ENCODE measurements at regions of chr21 and their contacts with region 1.

Region 1: GRCh38 chr21:21018821-21019220 is 20.6 kb downstream of the NCAM2 start:
- DNase-seq: no peak
- ATAC-seq: no peak
- H3K4me3 ChIP-seq: no peak overlapping the region
- H3K27ac ChIP-seq: no peak overlapping the region
- H3K4me1 ChIP-seq: no peaks in the 10 kb centered on the region
- H3K27me3 ChIP-seq: no peaks in the 10 kb centered on the region
- CTCF ChIP-seq: no peak

Region 2: GRCh38 chr21:20822666-20823065 is 196.2 kb before region 1 on chr21:
- CTCF ChIA-PET with region 1: no interaction called
- POLR2A ChIA-PET with region 1: no interaction called
- in situ Hi-C with region 1: no loop called
- intact Hi-C with region 1: no loop called
- DNase-seq: no peak
- ATAC-seq: no peak
- H3K4me3 ChIP-seq: no peak overlapping the region
- H3K27ac ChIP-seq: no peak overlapping the region
- H3K4me1 ChIP-seq: no peaks in the 10 kb centered on the region
- H3K27me3 ChIP-seq: no peaks in the 10 kb centered on the region
- CTCF ChIP-seq: no peak

Region 3: DNA sequence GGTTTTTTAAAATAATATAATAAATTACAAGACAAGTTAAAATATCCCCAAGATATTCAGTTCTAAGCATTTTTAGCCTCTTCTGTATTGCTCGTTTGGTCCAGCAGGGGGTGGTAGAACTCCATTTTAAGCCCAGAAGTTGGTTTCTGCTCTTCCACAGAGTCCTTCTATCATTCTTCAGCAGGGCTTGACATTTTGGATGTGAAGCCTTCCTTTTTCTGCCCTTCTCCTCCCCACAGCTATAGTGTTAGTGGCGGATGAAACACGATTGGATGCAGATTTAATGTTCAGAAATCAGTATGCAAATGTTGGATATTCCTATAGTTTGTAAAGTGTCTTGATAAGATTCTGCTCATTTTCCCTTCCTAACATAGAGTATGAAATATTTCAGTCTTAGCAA is 19.2 kb before region 1 on chr21:
- CTCF ChIA-PET with region 1: no interaction called
- POLR2A ChIA-PET with region 1: no interaction called
- in situ Hi-C with region 1: no loop called
- intact Hi-C with region 1: no loop called
- DNase-seq: no peak
- ATAC-seq: no peak
- H3K4me3 ChIP-seq: no peak overlapping the region
- H3K27ac ChIP-seq: no peak overlapping the region
- H3K4me1 ChIP-seq: no peaks in the 10 kb centered on the region
- H3K27me3 ChIP-seq: no peaks in the 10 kb centered on the region; the same call in 1 of the 2 replicates
- CTCF ChIP-seq: peak; percentile 77

Region 4: GRCh38 chr21:21057349-21058062 is 38.7 kb after region 1 on chr21:
- CTCF ChIA-PET with region 1: no interaction called
- POLR2A ChIA-PET with region 1: no interaction called
- in situ Hi-C with region 1: no loop called
- intact Hi-C with region 1: no loop called
- DNase-seq: no peak
- ATAC-seq: no peak
- H3K4me3 ChIP-seq: no peak overlapping the region
- H3K27ac ChIP-seq: no peak overlapping the region
- H3K4me1 ChIP-seq: no peaks in the 10 kb centered on the region
- H3K27me3 ChIP-seq: no peaks in the 10 kb centered on the region
- CTCF ChIP-seq: no peak

Region 5: GRCh38 chr21:21101911-21102310 is 83.1 kb after region 1 on chr21:
- CTCF ChIA-PET with region 1: no interaction called
- POLR2A ChIA-PET with region 1: no interaction called
- in situ Hi-C with region 1: no loop called
- intact Hi-C with region 1: loop called (anchors 10 kb)
- DNase-seq: no peak
- ATAC-seq: no peak
- H3K4me3 ChIP-seq: no peak overlapping the region
- H3K27ac ChIP-seq: no peak overlapping the region
- H3K4me1 ChIP-seq: no peaks in the 10 kb centered on the region
- H3K27me3 ChIP-seq: no peaks in the 10 kb centered on the region
- CTCF ChIP-seq: peak; percentile 21; the same call in 1 of the 2 replicates

Region 6: GRCh38 chr21:22554690-22555316 is 1536.0 kb after region 1 on chr21:
- CTCF ChIA-PET with region 1: no interaction called
- POLR2A ChIA-PET with region 1: no interaction called
- in situ Hi-C with region 1: no loop called
- intact Hi-C with region 1: no loop called
- DNase-seq: no peak
- ATAC-seq: no peak
- H3K4me3 ChIP-seq: no peak overlapping the region
- H3K27ac ChIP-seq: no peak overlapping the region; the same call in 1 of the 2 replicates
- H3K4me1 ChIP-seq: no peaks in the 10 kb centered on the region
- H3K27me3 ChIP-seq: no peaks in the 10 kb centered on the region
- CTCF ChIP-seq: no peak

Measured in Panc1 (cell line).